HCT116 (cell line): ENCODE measurements at regions of chr11 and their contacts with region 1.

Region 1: GRCh38 chr11:76512851-76513653 is 68.2 kb downstream of the EMSY start:
- DNase-seq: peak; percentile 16
- ATAC-seq: peak; percentile 54; the same call in 1 of the 2 replicates
- H3K4me3 ChIP-seq: no peak overlapping the region
- H3K27ac ChIP-seq: no peak overlapping the region
- H3K4me1 ChIP-seq: no peaks in the 10 kb centered on the region
- H3K27me3 ChIP-seq: no peaks in the 10 kb centered on the region
- CTCF ChIP-seq: peak; percentile 29 to 63 (median 31); a peak in 5 of 6 replicates
- POLR2A ChIP-seq: no peak
- RAD21 ChIP-seq: peak; percentile 63

Region 2: GRCh38 chr11:75896843-75897419 is 616.1 kb before region 1 on chr11:
- CTCF ChIA-PET with region 1: interaction called, 5 read pairs
- POLR2A ChIA-PET with region 1: no interaction called
- RAD21 ChIA-PET with region 1: no interaction called
- intact Hi-C with region 1: loop called (anchors 5 kb)
- DNase-seq: peak; percentile 12
- ATAC-seq: peak; percentile 52; the same call in 1 of the 2 replicates
- H3K4me3 ChIP-seq: no peak overlapping the region
- H3K27ac ChIP-seq: no peak overlapping the region
- H3K4me1 ChIP-seq: no peaks in the 10 kb centered on the region
- H3K27me3 ChIP-seq: no peaks in the 10 kb centered on the region
- CTCF ChIP-seq: peak; percentile 32 to 71 (median 69); a peak in 5 of 6 replicates
- POLR2A ChIP-seq: no peak
- RAD21 ChIP-seq: peak; percentile 82

Region 3: DNA sequence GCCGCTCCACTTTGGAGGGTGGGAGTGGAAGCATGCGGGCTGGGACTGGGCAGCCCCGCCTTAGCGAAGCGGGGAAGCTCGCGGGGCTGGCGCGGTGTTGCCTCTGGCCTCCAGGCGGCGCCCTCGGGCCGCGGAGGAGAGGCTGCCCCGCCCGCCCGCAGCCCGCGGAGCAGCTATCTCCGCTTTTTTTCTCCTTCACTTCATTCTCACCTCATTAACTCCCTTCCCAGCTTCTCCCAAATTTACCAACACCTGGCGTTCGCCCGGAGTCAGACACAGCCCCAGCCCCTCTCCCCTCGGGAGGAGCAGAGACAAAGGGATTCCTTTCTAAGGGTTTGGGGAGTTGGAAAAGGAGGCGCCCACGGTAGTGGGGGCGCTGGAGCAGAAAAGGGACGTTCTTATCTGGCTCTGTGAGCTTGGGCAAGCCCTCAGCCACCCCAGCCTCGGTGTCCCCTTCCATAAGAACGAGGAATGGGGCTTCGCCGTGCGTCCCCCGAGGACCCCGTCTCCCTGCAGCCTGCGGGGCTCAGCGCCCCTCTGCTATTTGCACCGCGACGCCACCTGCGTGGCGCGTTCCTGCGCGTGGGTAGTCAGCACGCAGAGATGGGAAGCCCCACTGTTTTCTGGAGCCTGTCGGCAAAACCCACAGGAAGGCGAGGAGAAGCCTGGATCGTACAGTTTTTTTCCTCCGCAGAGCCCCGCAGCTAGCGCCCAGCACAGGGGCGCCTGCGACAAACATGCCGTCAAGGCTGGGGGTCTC is 305.2 kb before region 1 on chr11:
- CTCF ChIA-PET with region 1: interaction called, 13 read pairs
- POLR2A ChIA-PET with region 1: no interaction called
- RAD21 ChIA-PET with region 1: interaction called in 1 of 2 experiments, 3 read pairs
- intact Hi-C with region 1: loop called (anchors 1 kb)
- DNase-seq: peak; percentile 51
- ATAC-seq: peak; percentile 79
- H3K4me3 ChIP-seq: peak overlapping the region; percentile 12 to 41
- H3K27ac ChIP-seq: no peak overlapping the region
- H3K4me1 ChIP-seq: peaks cover 8 to 42% of the 10 kb centered on the region in 2 experiments
- H3K27me3 ChIP-seq: peaks cover 13% of the 10 kb centered on the region; the same call in 1 of the 2 replicates
- CTCF ChIP-seq: peak; percentile 84 to 95 (median 91)
- POLR2A ChIP-seq: no peak
- RAD21 ChIP-seq: peak; percentile 95

Region 4: GRCh38 chr11:76371170-76371569 is 141.9 kb before region 1 on chr11:
- CTCF ChIA-PET with region 1: no interaction called
- POLR2A ChIA-PET with region 1: no interaction called
- RAD21 ChIA-PET with region 1: no interaction called
- intact Hi-C with region 1: loop called (anchors 10 kb)
- DNase-seq: peak; percentile 28
- ATAC-seq: peak; percentile 73
- H3K4me3 ChIP-seq: no peak overlapping the region
- H3K27ac ChIP-seq: no peak overlapping the region
- H3K4me1 ChIP-seq: peaks cover 7 to 12% of the 10 kb centered on the region in 2 experiments; a peak in 3 of 4 replicates
- H3K27me3 ChIP-seq: no peaks in the 10 kb centered on the region
- CTCF ChIP-seq: no peak
- POLR2A ChIP-seq: no peak
- RAD21 ChIP-seq: no peak

Region 5: DNA sequence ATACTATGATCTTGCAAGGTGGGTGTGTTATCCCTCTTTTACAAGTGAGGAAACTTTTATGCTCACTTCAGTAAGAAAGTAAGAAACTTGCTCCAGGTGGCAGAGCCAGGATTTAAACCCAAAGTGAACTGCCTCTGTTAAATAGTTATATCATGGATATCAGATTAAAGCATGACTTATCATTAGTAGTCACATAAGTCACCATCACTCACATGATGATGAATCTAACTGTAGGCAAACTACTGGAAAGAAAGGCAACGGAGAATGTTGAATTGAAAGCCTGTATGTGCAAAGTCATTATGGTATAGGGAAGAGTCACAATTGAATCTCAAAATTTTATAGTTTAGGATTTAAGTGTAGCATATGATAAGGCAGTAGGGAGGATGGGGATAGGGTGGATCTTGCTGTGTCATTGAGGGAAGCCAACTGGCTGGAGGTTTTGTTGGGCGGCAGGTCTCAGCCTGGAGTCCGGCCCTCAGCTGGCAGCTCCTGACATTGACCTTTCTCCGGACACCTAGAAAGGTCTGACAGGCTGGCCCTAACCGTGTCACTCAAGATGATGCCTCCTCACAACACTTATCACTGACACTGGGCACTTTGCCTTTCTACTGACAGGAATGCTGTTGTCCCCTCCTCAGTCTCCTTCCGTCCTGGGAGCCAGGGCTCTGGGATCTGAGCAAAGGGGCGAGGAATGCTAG is 30.1 kb after region 1 on chr11:
- CTCF ChIA-PET with region 1: no interaction called
- POLR2A ChIA-PET with region 1: no interaction called
- RAD21 ChIA-PET with region 1: no interaction called
- intact Hi-C with region 1: no loop called
- DNase-seq: no peak
- ATAC-seq: no peak
- H3K4me3 ChIP-seq: no peak overlapping the region
- H3K27ac ChIP-seq: no peak overlapping the region
- H3K4me1 ChIP-seq: no peaks in the 10 kb centered on the region
- H3K27me3 ChIP-seq: no peaks in the 10 kb centered on the region
- CTCF ChIP-seq: no peak
- POLR2A ChIP-seq: no peak
- RAD21 ChIP-seq: no peak